Activated CD4-positive, alpha-beta T cell treated with anti-CD3 and anti-CD28 coated beads, Interleukin-2, amount 10 ng/mL, durations not matched to agents 24 days and 14 days (primary cell): ENCODE measurements at regions of chr19 and their contacts with region 1.

Region 1: DNA sequence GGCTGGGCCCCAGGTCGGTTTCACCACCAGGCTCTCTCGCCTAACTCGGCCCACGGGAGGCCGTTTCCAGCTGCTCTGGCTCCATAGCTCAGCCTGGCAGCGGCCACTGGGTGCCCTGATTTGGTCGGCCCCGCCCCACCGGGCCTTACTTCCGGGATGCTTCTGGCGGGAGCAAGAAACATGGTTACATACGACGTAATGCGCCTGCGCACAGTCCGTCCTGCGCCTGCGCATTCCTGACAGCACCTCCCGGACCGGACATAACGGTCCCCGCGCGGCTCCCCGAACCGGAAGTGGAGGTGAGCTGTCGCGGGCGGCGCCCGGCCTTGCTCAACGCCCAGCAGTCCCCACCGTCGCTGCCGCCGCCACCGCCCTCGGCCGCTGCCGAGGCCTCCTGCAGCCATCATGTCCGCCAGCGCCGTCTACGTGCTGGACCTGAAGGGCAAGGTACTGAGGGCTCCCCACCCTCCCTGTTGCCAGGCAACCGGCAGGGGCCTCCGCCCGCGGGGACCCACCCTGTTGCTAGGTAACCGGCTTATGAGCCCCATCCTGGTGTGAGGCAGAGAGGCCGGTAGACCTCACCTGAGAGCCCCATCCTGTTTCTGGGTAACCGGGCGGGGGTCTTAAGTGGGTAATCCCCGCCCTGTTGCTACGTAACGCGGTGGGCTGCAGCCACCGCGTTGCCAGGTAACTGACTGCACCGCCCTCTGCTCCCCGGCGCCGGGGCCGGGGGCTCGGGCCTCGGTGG is at the start of gene AP1M1:
- DNase-seq: peak; percentile 100
- H3K4me3 Mint-ChIP-seq: peak within 1 kb of the TSS; percentile 93
- H3K27ac Mint-ChIP-seq: peak within 1 kb of the TSS; percentile 92
- H3K4me1 Mint-ChIP-seq: peaks cover 39% of the 10 kb centered on the region
- H3K27me3 Mint-ChIP-seq: no peaks in the 10 kb centered on the region
- total RNA-seq, gene AP1M1: 107 and 111 TPM in 2 replicates

Region 2: DNA sequence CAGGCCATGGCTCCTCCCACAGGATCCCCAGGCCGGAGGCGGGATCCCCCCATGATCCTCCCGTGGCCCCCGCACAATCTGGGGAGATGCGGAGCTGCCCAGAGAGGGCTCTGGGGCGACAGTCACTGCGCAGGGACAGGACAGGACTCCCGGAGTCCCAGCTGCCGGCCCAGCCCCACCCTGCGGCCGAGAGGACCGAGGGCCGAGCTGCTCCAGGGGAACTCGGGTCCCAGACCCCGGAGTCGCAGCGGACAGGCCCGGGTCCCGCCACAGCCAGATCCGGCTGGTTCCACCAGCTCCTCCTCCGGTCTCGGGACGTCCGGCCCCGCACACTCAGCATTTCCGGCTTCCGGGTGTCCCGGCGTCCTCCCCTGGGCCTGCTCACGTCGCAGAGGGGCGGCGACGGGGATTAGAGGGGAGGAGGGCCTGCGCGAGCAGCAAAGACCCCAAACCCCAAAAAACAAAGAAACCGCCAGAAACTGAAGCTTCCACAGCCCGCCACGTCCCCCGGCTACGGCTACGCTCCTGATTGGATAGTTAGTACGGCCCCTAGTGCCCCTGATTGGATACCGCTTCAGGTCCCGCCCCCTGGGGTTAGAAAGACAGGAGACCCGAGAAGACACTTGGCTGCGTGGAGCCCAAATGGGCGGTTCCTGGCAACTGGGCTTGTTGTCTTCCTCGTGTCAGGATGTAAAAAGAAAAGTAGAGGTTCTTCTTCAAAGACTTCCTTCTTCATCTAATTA is 361.0 kb before region 1 on chr19:
- intact Hi-C with region 1: loop called (anchors 5 kb)
- DNase-seq: peak; percentile 99
- H3K4me3 Mint-ChIP-seq: peak overlapping the region; percentile 87
- H3K27ac Mint-ChIP-seq: peak overlapping the region; percentile 98
- H3K4me1 Mint-ChIP-seq: peaks cover 13% of the 10 kb centered on the region
- H3K27me3 Mint-ChIP-seq: no peaks in the 10 kb centered on the region